Left colon (tissue), 2 donors: ENCODE measurements at regions of chr17 and their contacts with region 1.

Region 1: GRCh38 chr17:40113110-40113906 is 8.5 kb upstream of the MSL1 start:
- DNase-seq: peak; percentile 95 to 96
- ATAC-seq: peak; percentile 69

Region 2: GRCh38 chr17:40068917-40069750 is 44.2 kb before region 1 on chr17:
- intact Hi-C with region 1: loop called in 1 of 2 experiments (anchors 5 kb)
- DNase-seq: peak; percentile 90 to 92
- ATAC-seq: peak; percentile 13

Region 3: GRCh38 chr17:40168262-40168832 is 55.0 kb after region 1 on chr17:
- intact Hi-C with region 1: loop called in 1 of 2 experiments (anchors 2 kb)
- DNase-seq: no peak
- ATAC-seq: peak; percentile 78